Mammary epithelial cell (primary cell): ENCODE measurements at regions of chr1 and their contacts with region 1.

Region 1: GRCh38 chr1:42305639-42306038 is 29.4 kb downstream of the FOXJ3 start:
- DNase-seq: no peak
- H3K4me3 ChIP-seq: no peak overlapping the region
- H3K27ac ChIP-seq: no peak overlapping the region
- H3K4me1 ChIP-seq: peaks cover 5% of the 10 kb centered on the region
- H3K27me3 ChIP-seq: no peaks in the 10 kb centered on the region
- CTCF ChIP-seq: no peak

Region 2: DNA sequence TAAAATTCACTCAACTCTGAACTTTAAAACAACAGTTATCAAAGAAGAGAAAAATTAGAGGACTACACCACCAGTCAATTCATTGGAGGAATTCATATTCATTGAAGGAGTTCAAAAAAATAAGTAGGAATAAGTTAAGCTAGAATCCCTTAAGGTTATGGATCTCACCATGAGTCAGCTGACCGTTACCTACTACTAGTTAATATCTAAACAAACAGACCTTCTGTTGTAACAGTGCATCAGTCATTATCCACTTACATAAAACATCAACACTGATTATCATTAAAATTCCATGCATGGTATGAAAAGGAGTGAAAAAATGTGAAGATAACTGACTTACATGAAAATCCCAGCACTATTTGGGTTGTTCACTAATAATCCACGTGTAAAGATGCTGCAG is 15.5 kb before region 1 on chr1:
- CTCF ChIA-PET with region 1: no interaction called
- dilution Hi-C with region 1: no loop called
- in situ Hi-C with region 1: no loop called
- intact Hi-C with region 1: loop called (anchors 2 kb)
- DNase-seq: peak; percentile 15
- H3K4me3 ChIP-seq: no peak overlapping the region
- H3K27ac ChIP-seq: no peak overlapping the region
- H3K4me1 ChIP-seq: no peaks in the 10 kb centered on the region
- H3K27me3 ChIP-seq: no peaks in the 10 kb centered on the region
- CTCF ChIP-seq: no peak